IMR-90 (cell line): ENCODE measurements at regions of chr6 and their contacts with region 1.

Region 1: DNA sequence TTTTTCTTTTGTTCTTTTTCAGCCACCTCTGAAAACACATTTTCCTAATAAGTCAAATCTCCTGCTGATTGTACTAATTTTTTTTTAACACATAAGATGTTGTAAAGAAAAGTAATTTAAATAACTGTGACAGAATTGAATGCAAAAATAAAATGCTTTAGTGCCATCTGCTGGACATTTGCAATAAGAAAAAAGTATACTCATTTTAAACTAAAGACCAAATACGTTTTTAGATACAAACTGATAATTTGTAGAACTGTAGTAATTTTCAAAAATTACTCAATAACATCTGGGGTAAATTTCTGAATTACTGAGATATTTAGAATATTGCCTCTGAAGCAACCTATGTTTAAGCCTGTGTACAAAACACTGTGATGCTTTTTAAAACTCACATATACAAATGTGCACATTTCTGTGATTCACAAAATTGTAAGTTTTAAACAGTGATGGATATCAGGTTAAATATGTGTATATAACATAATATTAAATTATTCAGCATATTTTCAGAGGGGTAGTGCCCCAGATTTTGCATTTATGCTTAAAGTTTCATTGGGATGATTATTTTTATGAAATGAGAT is 198.7 kb downstream of the RIMS1 start:
- DNase-seq: peak; percentile 18
- ATAC-seq: no peak
- H3K4me3 ChIP-seq: no peak overlapping the region
- H3K27ac ChIP-seq: no peak overlapping the region
- H3K4me1 ChIP-seq: no peaks in the 10 kb centered on the region
- H3K27me3 ChIP-seq: peaks cover 2% of the 10 kb centered on the region; the same call in 1 of the 2 replicates
- CTCF ChIP-seq: peak; percentile 57
- POLR2A ChIP-seq: no peak
- RAD21 ChIP-seq: peak; percentile 55

Region 2: GRCh38 chr6:71383901-71384489 is 701.1 kb before region 1 on chr6:
- CTCF ChIA-PET with region 1: no interaction called
- POLR2A ChIA-PET with region 1: no interaction called
- dilution Hi-C with region 1: no loop called
- in situ Hi-C with region 1: loop called (anchors 25 kb)
- intact Hi-C with region 1: loop called (anchors 1 kb)
- DNase-seq: peak; percentile 72
- ATAC-seq: peak; percentile 64
- H3K4me3 ChIP-seq: no peak overlapping the region
- H3K27ac ChIP-seq: no peak overlapping the region
- H3K4me1 ChIP-seq: peaks cover 9% of the 10 kb centered on the region
- H3K27me3 ChIP-seq: no peaks in the 10 kb centered on the region
- CTCF ChIP-seq: peak; percentile 82
- POLR2A ChIP-seq: peak; percentile 50; the same call in 1 of the 2 replicates
- RAD21 ChIP-seq: peak; percentile 96

Region 3: DNA sequence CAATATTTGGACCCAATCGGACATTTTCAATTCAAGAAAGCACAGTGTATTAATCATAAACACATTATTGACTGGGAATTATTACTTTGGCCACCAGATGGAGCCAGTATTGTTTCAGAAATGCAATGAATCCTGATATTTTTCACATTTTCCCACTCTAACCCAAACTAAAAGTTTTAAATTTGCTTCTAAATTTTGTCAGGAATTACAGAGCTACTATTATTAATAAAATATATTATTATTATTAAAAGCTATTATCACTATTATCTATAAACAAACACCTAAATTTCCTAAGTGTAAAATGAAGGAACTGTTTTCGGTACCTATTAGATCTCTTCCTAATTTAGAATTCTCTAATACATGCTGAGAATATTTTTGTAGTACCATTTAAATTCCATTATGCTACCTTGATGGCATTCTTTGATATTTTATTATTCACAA is 551.1 kb before region 1 on chr6:
- CTCF ChIA-PET with region 1: interaction called, 4 read pairs
- POLR2A ChIA-PET with region 1: no interaction called
- dilution Hi-C with region 1: no loop called
- in situ Hi-C with region 1: loop called (anchors 10 kb)
- intact Hi-C with region 1: loop called (anchors 1 kb)
- DNase-seq: peak; percentile 46
- ATAC-seq: peak; percentile 40; the same call in 1 of the 2 replicates
- H3K4me3 ChIP-seq: no peak overlapping the region
- H3K27ac ChIP-seq: no peak overlapping the region
- H3K4me1 ChIP-seq: no peaks in the 10 kb centered on the region; the same call in 1 of the 2 replicates
- H3K27me3 ChIP-seq: no peaks in the 10 kb centered on the region
- CTCF ChIP-seq: peak; percentile 70
- POLR2A ChIP-seq: no peak
- RAD21 ChIP-seq: peak; percentile 63

Region 4: GRCh38 chr6:71621918-71622519 is 463.1 kb before region 1 on chr6:
- CTCF ChIA-PET with region 1: no interaction called
- POLR2A ChIA-PET with region 1: no interaction called
- dilution Hi-C with region 1: no loop called
- in situ Hi-C with region 1: no loop called
- intact Hi-C with region 1: loop called (anchors 5 kb)
- DNase-seq: peak; percentile 17
- ATAC-seq: no peak
- H3K4me3 ChIP-seq: no peak overlapping the region
- H3K27ac ChIP-seq: no peak overlapping the region
- H3K4me1 ChIP-seq: no peaks in the 10 kb centered on the region
- H3K27me3 ChIP-seq: peaks cover 3% of the 10 kb centered on the region
- CTCF ChIP-seq: peak; percentile 45
- POLR2A ChIP-seq: no peak
- RAD21 ChIP-seq: peak; percentile 46